Activated CD4-positive, alpha-beta T cell treated with anti-CD3 and anti-CD28 coated beads for 36 hours (primary cell): ENCODE measurements at regions of chr12 and their contacts with region 1.

Region 1: DNA sequence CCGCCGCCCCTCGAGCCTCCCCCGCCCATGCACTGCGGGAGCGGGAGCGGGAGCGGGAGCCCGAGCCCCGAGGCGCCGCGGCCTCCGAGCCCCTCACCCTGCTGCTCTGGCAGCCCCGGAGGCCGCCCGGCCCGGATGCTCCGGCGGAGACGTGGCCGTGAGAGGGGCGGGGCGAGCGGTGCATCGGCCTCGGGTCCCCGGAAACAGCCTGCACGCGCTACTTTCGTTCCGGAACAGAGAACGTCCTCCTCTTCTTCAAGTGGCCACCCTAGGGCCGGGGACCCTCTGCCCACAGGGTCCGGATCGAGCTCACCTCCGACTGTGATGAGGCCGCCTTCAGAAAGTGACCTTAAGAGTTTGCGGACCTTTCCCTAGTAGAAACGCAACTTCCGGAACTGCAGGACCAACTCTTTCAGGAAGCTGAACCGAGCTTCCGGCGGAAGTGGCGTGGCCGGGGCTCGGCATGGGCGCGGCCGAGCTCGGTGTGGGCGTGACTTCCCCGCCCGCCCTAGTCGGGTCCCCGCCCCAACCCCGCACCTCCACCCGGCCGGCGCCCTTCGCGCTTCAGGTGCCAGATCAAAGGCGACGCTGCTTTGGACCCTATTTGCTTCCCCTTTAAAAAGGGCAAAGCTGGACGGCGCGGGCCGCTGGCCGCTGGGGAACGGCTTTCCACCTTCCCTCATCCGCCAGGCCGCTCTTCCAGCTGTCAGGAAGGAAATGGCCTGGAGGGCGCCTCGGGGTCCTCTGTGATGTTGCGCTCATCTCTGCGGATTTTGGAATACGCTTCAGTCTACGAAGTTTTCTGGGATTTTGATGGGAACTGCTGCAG is at the start of gene GOLGA3:
- DNase-seq: peak; percentile 98
- ATAC-seq: peak; percentile 89
- H3K4me3 Mint-ChIP-seq: peak within 1 kb of the TSS; percentile 93
- H3K27ac Mint-ChIP-seq: peak within 1 kb of the TSS; percentile 100
- H3K4me1 Mint-ChIP-seq: peaks cover 44% of the 10 kb centered on the region
- H3K27me3 Mint-ChIP-seq: no peaks in the 10 kb centered on the region
- total RNA-seq, gene GOLGA3: 36.7 to 38.5 TPM

Region 2: DNA sequence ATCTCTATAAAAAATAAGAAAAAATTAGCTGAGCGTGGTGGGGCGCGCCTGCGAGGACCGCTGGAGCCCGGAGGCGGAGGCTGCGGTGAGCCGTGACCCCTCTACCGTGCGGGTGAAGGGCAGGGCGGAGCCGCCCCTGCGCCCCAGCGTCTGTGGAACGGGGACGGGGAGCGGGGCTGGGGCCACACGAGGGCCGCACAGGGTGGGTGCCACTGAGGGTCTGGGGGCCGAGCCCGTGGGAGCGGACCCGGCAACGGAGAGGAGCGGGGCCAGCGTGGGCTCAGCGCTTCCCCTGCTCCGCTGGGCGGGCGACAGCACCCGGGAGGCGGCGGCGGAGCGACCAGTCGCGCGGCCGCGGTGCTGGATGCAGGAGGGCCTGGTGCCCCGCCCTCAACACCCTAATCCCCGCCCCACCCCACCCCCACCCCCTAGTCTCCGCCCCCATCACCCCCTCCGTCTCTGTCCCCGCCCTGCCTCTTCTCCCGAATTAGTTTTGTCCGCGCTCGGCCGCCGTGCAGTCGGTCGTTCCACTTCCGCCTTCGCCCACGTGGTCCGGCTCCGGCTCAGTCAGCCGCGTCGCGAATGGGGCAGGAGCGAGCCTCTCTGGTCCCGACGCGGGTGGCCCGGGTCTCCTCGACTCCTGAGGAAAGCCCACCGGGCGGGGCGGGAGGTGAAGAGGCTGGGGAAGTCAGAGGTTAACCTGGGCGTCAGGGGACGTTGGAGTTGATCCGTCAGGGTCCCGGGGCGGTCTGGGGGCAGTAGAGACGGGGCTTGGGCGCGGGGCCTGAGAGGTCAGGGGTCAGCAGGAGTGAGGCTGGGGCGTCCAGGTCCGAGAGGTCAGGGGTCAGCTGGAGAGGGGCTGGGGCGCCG is 900.0 kb before region 1 on chr12 and contains the start of gene PUS1:
- CTCF ChIA-PET with region 1: no interaction called
- POLR2A ChIA-PET with region 1: no interaction called
- intact Hi-C with region 1: loop called in 1 of 2 experiments (anchors 1 kb)
- DNase-seq: peak; percentile 97
- ATAC-seq: peak; percentile 89
- H3K4me3 Mint-ChIP-seq: peak within 1 kb of the TSS; percentile 97
- H3K27ac Mint-ChIP-seq: peak within 1 kb of the TSS; percentile 85
- H3K4me1 Mint-ChIP-seq: peaks cover 25% of the 10 kb centered on the region
- H3K27me3 Mint-ChIP-seq: no peaks in the 10 kb centered on the region
- total RNA-seq, gene PUS1: 37.8 to 56.5 TPM

Region 3: DNA sequence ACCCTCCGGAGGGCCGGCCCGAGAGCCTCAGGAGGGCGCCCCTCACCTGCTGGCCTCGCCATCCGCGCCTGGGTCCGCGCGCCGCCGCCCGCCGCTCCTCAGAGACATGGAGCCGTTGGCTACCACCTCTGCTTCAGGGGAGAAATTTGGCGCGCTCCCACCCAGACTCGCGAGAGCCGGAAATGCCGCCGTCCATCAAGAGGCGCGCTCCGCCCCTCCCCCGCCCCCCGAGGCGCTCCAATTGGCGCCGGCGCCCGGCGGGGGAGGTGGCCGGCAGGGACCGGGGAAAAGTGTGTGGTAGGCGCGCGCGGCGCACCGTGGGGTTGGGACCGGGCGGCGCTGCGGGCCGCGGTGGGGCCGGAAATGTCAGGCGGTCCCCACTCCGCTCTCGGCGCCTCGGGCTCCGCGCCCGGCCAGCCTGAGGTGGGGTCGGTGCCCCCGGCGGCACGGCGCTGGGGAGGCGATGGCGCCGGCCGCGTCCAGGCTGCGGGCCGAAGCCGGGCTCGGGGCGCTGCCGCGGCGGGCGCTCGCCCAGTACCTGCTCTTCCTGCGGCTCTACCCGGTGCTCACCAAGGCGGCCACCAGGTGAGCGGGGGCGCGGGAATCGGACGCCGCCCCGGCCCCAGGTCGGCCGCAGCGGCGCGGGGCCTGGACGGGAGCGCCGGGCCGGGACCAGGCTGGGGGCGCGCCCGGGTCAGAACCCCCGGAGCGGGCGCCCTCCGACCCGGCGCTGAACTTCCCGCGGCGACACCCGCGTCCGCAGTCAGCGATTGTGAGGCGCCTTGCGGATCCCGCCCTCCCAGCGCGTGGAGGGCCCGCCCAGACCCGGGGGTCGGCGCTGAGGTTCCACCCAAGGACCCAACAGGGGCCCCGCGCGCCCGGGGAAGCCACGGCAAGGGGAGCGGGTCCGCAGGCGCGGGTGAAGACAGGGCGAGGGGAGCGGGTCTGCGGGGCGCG is 141.4 kb before region 1 on chr12 and contains the starts of genes POLE and PXMP2:
- CTCF ChIA-PET with region 1: no interaction called
- POLR2A ChIA-PET with region 1: interaction called, 3 read pairs
- intact Hi-C with region 1: loop called in 1 of 2 experiments (anchors 1 kb)
- DNase-seq: peak; percentile 98
- ATAC-seq: peak; percentile 94
- H3K4me3 Mint-ChIP-seq: peak within 1 kb of the TSS; percentile 72
- H3K27ac Mint-ChIP-seq: peak within 1 kb of the TSS; percentile 55
- H3K4me1 Mint-ChIP-seq: peaks cover 19% of the 10 kb centered on the region
- H3K27me3 Mint-ChIP-seq: no peaks in the 10 kb centered on the region
- total RNA-seq, gene POLE: 121 to 124 TPM
- total RNA-seq, gene PXMP2: 12.2 to 14.3 TPM

Region 4: DNA sequence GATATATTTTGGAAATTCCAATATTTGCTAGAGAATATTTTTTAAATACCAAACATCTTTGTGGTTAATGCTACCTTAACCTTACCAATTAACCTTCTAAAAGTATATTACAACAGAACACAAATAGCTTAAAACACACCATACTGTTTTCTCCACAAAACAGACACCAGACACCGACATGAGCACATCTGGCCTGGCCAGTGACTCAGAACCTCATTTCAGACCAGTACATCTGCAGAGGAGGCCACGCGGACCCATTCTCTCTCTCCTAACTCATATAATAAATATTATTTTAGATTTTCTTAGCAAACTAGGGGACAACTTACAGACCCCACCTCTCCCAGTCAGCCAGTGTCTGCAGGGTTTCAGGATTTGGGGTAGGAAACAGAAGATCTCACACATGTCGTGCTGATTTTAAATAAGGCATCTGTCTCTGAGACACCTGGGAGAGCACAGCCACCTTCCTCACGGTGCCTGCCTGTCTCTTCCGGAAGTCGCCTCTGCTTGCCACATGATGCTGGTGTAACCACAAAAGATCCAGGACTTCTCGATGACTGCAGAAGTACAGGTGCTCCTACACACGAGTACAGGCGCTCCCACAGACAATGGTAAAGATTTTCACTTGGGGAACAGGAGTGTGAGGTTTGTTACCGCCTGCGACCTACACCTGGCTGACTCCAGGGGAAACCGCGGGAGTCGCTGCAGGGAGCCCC is 57.6 kb before region 1 on chr12:
- CTCF ChIA-PET with region 1: interaction called, 3 read pairs
- POLR2A ChIA-PET with region 1: no interaction called
- intact Hi-C with region 1: loop called in 1 of 2 experiments (anchors 2 kb)
- DNase-seq: peak; percentile 71
- ATAC-seq: peak; percentile 82
- H3K4me3 Mint-ChIP-seq: peak overlapping the region; percentile 52
- H3K27ac Mint-ChIP-seq: peak overlapping the region; percentile 89
- H3K4me1 Mint-ChIP-seq: peaks cover 61% of the 10 kb centered on the region
- H3K27me3 Mint-ChIP-seq: no peaks in the 10 kb centered on the region

Region 5: GRCh38 chr12:132956011-132956788 is 127.3 kb after region 1 on chr12 and contains the start of gene ZNF605:
- CTCF ChIA-PET with region 1: no interaction called
- POLR2A ChIA-PET with region 1: no interaction called
- intact Hi-C with region 1: loop called in 1 of 2 experiments (anchors 1 kb)
- DNase-seq: peak; percentile 93
- ATAC-seq: peak; percentile 91
- H3K4me3 Mint-ChIP-seq: peak within 1 kb of the TSS; percentile 93
- H3K27ac Mint-ChIP-seq: peak within 1 kb of the TSS; percentile 88
- H3K4me1 Mint-ChIP-seq: peaks cover 22% of the 10 kb centered on the region
- H3K27me3 Mint-ChIP-seq: no peaks in the 10 kb centered on the region
- total RNA-seq, gene ZNF605: 8.0 to 8.3 TPM

Region 6: GRCh38 chr12:133080368-133081158 is 251.6 kb after region 1 on chr12 and contains the start of gene ZNF140:
- CTCF ChIA-PET with region 1: no interaction called
- POLR2A ChIA-PET with region 1: no interaction called
- intact Hi-C with region 1: loop called in 1 of 2 experiments (anchors 1 kb)
- DNase-seq: peak; percentile 97
- ATAC-seq: peak; percentile 64
- H3K4me3 Mint-ChIP-seq: no peak within 1 kb of the TSS
- H3K27ac Mint-ChIP-seq: no peak within 1 kb of the TSS
- H3K4me1 Mint-ChIP-seq: peaks cover 13% of the 10 kb centered on the region
- H3K27me3 Mint-ChIP-seq: no peaks in the 10 kb centered on the region
- total RNA-seq, gene ZNF140: 13.3 to 14.3 TPM